ENCODE measurements at regions of chr7 and their contacts with region 1.

Region 1: DNA sequence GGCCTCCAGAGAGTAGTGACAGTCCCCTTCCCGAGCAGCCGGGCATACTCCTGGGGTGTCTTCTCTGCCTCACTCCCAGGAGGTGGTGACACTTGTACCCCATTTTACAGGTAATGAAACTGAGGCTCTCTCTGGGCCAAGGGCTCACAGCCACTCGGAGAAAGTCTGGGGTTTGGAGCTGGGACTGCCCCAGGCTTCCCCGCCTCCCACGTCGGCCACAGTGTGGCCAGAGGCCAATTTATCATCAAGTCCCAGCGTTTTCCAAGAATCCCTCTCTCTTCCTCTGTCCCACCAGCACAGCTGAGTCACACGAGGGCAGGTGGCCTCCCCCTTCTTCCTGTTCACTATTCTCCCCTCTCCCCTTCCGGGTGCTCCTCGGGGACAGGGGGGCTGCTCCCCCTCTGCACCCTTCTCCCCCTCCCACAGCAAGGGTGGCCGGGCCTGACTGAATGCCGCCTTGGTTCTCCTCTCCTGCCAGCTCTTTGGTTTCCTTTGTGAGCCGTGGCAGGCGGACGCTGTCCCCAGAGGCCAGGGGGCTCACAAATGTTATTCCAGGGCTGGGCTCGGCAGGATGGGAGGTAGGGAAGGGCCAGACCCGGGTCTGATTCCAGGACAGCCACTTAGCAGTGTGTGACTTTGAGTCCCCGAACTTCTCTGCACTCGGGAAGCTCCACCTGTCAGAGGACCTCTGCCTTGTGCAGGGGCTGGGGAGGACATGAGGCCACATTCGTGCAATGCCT is 17.7 kb downstream of the CLIP2 start:
- DNase-seq: peak; percentile 53
- ATAC-seq: peak; percentile 59
- H3K4me3 Mint-ChIP-seq: peak overlapping the region; percentile 37
- H3K27ac Mint-ChIP-seq: no peak overlapping the region
- H3K4me1 Mint-ChIP-seq: peaks cover 20% of the 10 kb centered on the region
- H3K27me3 Mint-ChIP-seq: peaks cover 3% of the 10 kb centered on the region
- CTCF ChIP-seq: no peak

Region 2: GRCh38 chr7:74355091-74355490 is 48.2 kb after region 1 on chr7:
- CTCF ChIA-PET with region 1: interaction called, 3 read pairs
- POLR2A ChIA-PET with region 1: no interaction called
- intact Hi-C with region 1: loop called (anchors 5 kb)
- DNase-seq: peak; percentile 13
- ATAC-seq: no peak
- H3K4me3 Mint-ChIP-seq: no peak overlapping the region
- H3K27ac Mint-ChIP-seq: no peak overlapping the region
- H3K4me1 Mint-ChIP-seq: no peaks in the 10 kb centered on the region
- H3K27me3 Mint-ChIP-seq: no peaks in the 10 kb centered on the region
- CTCF ChIP-seq: no peak

Measured in activated CD8-positive, alpha-beta T cell treated with anti-CD3 and anti-CD28 coated beads for 36 hours (primary cell).